ENCODE measurements at regions of chr6 and their contacts with region 1.

Region 1: DNA sequence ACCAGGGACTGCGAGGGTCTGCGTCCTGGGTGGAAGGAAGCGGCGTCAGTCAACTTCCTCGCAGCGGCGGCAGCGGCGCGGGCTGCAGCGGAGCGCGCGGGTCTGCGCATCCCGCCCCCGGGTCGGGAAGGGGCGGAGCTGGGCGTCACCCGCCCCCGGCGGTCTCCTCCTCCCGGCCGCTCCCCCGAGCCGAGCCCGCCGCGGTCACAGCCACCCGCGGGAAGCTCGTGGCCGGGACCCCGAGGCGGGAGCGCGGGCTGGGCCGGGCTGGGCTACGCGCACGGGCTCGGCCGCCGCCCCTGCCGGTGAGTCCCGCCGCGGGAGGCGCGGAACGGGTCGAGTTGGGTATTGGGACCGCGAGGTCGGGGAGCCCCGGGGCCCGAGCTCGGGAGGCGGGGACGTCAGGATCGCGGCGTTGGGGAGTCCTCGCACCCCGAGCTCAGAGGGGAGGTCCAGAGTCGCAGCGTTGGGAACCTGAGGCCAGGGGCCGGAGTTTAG is at the start of gene PAQR8:
- DNase-seq: peak; percentile 75
- H3K4me3 Mint-ChIP-seq: peak within 1 kb of the TSS; percentile 96
- H3K27ac Mint-ChIP-seq: peak within 1 kb of the TSS; percentile 84
- H3K4me1 Mint-ChIP-seq: peaks cover 33% of the 10 kb centered on the region
- H3K27me3 Mint-ChIP-seq: peaks cover 7% of the 10 kb centered on the region
- total RNA-seq, gene PAQR8: 2.5 and 2.8 TPM in 2 replicates

Region 2: DNA sequence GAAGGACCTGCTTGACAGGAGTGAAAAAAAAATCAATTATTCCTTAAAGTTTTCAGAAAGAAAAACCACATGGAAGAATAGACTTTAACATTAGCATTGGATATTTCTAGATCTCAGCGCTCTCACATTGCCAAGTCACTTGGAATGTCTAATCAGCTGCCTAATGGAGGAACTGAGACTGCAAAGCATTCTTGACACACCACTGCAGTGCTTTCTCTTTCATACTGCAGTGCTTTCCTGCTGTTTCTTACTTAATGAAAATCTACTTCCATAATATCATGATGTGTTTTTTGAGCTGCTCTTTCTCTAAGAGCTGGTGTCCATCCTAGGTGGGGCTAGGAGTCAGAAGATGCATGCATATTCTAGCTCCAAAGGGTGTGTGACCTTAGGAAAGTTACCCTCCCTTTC is 57.0 kb before region 1 on chr6:
- intact Hi-C with region 1: loop called (anchors 5 kb)
- DNase-seq: no peak
- H3K4me3 Mint-ChIP-seq: peak overlapping the region; percentile 10
- H3K27ac Mint-ChIP-seq: peak overlapping the region; percentile 45
- H3K4me1 Mint-ChIP-seq: peaks cover 50% of the 10 kb centered on the region
- H3K27me3 Mint-ChIP-seq: no peaks in the 10 kb centered on the region

Region 3: DNA sequence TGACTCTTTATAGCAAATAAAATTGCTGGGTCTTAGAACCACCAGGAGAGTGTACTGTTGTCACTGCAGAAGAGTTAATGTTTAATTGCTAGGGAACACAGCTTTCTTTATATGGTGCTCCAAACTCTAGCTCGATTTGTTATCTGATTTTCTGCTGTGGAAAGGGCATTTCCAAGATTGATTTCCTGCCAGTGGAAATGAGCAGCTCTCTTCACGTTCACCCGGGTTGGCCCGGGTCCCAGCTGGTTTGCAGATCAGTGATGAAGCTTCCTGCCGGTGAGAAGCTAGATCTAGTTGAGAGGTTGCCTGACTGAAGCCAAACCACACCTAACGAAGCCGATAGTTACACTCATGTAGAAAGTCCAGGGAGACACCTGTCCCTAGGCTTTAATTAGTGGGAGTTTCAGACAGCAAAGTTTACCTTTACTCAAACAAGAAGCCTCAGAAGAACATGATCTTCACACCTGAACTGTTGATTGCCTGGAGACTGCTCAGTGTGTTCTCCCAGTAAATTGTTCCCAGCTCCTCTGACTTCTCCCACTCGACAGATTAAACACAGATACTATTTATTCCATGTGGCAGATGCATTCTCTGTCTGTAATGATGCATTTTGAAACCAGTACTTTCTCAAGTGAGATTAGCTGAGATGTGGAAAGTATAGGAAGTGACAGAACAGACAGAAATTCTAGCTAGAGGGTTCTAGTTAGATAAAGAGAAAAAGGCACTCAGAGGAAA is 27.8 kb after region 1 on chr6:
- intact Hi-C with region 1: loop called (anchors 1 kb)
- DNase-seq: peak; percentile 45
- H3K4me3 Mint-ChIP-seq: peak overlapping the region; percentile 66
- H3K27ac Mint-ChIP-seq: peak overlapping the region; percentile 88
- H3K4me1 Mint-ChIP-seq: peaks cover 62% of the 10 kb centered on the region
- H3K27me3 Mint-ChIP-seq: peaks cover 4% of the 10 kb centered on the region

Region 4: GRCh38 chr6:52399511-52400312 is 37.7 kb after region 1 on chr6:
- intact Hi-C with region 1: loop called (anchors 1 kb)
- DNase-seq: no peak
- H3K4me3 Mint-ChIP-seq: peak overlapping the region; percentile 42
- H3K27ac Mint-ChIP-seq: peak overlapping the region; percentile 38
- H3K4me1 Mint-ChIP-seq: peaks cover 52% of the 10 kb centered on the region
- H3K27me3 Mint-ChIP-seq: peaks cover 5% of the 10 kb centered on the region

Measured in activated T-helper 1 cell treated with anti-CD3 and anti-CD28 coated beads, Interleukin-12 subunit alpha, Interleukin-12 subunit beta, Interleukin-2, Interleukin-4 antibody, amounts not matched to agents 30 ng/mL and 10 ng/mL and 1 ng/mL, durations not matched to agents 14 hours and 24 hours and 36 hours (primary cell).